ENCODE measurements at regions of chr2 and their contacts with region 1.

Region 1: GRCh38 chr2:38370664-38371063 is 6.4 kb downstream of the ATL2 start:
- DNase-seq: no peak
- H3K4me3 ChIP-seq: no peak overlapping the region
- H3K27ac ChIP-seq: no peak overlapping the region
- H3K4me1 ChIP-seq: no peaks in the 10 kb centered on the region
- H3K27me3 ChIP-seq: no peaks in the 10 kb centered on the region
- CTCF ChIP-seq: no peak

Region 2: DNA sequence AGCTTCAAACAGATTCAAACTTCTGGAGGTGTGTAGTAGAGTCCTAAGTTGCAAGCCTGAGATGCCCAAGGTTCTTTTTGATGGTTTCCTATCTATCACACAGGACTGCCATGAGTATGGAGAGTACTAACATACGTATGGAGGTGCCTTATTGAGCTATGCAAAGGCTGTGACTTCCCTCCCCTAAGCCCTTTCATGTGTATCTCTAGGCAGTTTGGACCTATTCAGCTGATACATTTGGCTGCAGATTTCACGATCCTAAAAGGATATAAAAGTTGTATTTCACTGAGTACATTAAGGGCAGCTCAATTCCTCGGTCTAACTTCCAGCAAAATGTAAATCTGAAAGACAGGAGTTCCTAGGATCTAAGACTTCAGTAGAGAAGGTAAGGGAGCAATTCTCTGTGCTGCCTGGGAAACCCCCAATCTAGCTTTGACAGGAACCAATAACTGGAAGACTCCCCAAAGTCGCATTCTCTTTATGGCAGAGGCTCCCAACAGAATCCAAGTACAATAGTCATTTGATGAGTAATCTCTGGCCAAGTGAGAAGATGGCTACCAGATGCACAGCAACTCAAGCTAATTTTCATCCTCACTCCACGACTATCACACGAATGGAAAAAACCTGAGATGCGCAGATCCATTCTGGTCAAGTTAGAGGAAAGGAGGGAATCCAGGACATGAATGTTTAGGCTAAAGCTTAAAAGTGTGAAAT is 77.4 kb before region 1 on chr2:
- CTCF ChIA-PET with region 1: no interaction called
- dilution Hi-C with region 1: loop called (anchors 5 kb)
- in situ Hi-C with region 1: no loop called
- intact Hi-C with region 1: no loop called
- DNase-seq: no peak
- H3K4me3 ChIP-seq: no peak overlapping the region
- H3K27ac ChIP-seq: no peak overlapping the region
- H3K4me1 ChIP-seq: no peaks in the 10 kb centered on the region
- H3K27me3 ChIP-seq: no peaks in the 10 kb centered on the region
- CTCF ChIP-seq: no peak

Region 3: GRCh38 chr2:39243476-39244123 is 872.9 kb after region 1 on chr2 and contains the start of gene CDKL4:
- CTCF ChIA-PET with region 1: no interaction called
- dilution Hi-C with region 1: no loop called
- in situ Hi-C with region 1: no loop called
- intact Hi-C with region 1: no loop called
- DNase-seq: no peak
- H3K4me3 ChIP-seq: peak within 1 kb of the TSS; percentile 22 to 51 (median 51)
- H3K27ac ChIP-seq: no peak within 1 kb of the TSS
- H3K4me1 ChIP-seq: peaks cover 6% of the 10 kb centered on the region
- H3K27me3 ChIP-seq: no peaks in the 10 kb centered on the region
- CTCF ChIP-seq: no peak
- total RNA-seq, gene CDKL4: 1.2 to 3.0 TPM

Measured in mammary epithelial cell (primary cell).